Activated B cell treated with CpG ODN at 0.5 μM for 24 hours (primary cell): ENCODE measurements at regions of chr15 and their contacts with region 1.

Region 1: DNA sequence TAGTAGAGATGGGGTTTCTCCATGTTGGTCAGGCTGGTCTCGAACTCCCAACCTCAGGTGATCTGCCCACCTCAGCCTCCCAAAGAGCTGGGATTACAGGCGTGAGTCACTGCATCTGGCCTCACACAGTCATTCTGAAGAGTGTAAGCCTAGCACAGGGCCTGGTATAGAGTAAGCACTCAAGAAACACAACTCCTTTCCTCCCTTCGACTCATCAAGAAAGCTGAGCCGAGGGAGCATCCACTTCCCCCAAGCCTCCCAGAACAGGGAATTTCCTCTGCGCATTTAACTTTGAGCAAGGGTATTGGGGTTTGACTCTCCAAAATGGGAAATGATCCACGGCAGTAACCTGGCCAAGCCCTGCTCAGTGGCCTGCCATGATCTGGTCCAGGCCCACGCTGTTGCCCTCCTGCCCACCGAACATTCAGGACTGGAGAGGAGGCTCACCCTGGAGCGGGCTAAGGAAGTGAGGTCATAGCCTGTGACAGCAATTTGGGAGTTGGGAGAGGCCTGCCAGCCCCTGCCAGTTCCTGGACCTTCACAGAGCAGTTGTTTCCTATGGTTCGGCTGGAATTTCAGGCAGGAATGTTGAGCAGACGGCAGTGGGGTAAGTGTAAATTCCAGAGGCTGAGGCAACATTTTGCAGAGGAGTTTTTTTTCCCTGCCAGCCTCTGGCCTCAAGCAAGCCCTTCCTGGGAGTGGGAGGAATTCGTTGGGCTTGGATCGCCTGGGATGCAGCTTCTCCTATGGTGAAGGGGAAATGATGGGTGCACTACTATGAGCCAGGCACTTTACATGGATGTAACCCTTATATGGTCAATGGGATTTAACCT is 21.2 kb upstream of the SMAD3 start:
- DNase-seq: no peak
- ATAC-seq: no peak
- H3K4me3 Mint-ChIP-seq: no peak overlapping the region
- H3K27ac Mint-ChIP-seq: no peak overlapping the region
- H3K4me1 Mint-ChIP-seq: peaks cover 34% of the 10 kb centered on the region
- H3K27me3 Mint-ChIP-seq: no peaks in the 10 kb centered on the region
- CTCF ChIP-seq: no peak

Region 2: DNA sequence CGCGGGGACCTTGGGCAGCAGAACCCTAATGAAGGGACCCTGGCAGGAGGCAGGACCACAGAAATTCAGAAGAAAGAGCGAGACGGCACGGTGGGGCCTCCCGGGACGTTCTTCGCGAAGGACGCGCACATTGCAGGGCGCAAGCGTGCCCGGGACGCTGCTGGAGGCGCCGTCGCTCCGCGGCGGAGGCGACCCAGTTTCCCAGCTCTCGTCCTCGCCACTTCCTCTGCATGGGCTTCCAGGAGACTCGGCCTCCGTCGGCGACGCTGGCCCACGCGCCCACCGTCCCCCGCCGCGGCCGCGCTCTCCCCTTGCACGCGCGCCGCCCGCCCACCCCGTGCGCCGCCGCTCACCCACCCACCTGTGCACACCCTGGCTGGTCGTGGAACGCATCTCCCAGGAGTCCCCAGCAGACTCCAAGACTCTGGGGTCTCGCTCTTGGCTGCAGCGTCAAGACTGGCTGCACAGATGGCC is 10.5 kb before region 1 on chr15:
- CTCF ChIA-PET with region 1: no interaction called
- POLR2A ChIA-PET with region 1: interaction called, 11 read pairs
- intact Hi-C with region 1: no loop called
- DNase-seq: no peak
- ATAC-seq: peak; percentile 59
- H3K4me3 Mint-ChIP-seq: peak overlapping the region; percentile 51
- H3K27ac Mint-ChIP-seq: no peak overlapping the region
- H3K4me1 Mint-ChIP-seq: peaks cover 26% of the 10 kb centered on the region
- H3K27me3 Mint-ChIP-seq: peaks cover 4% of the 10 kb centered on the region
- CTCF ChIP-seq: no peak

Region 3: DNA sequence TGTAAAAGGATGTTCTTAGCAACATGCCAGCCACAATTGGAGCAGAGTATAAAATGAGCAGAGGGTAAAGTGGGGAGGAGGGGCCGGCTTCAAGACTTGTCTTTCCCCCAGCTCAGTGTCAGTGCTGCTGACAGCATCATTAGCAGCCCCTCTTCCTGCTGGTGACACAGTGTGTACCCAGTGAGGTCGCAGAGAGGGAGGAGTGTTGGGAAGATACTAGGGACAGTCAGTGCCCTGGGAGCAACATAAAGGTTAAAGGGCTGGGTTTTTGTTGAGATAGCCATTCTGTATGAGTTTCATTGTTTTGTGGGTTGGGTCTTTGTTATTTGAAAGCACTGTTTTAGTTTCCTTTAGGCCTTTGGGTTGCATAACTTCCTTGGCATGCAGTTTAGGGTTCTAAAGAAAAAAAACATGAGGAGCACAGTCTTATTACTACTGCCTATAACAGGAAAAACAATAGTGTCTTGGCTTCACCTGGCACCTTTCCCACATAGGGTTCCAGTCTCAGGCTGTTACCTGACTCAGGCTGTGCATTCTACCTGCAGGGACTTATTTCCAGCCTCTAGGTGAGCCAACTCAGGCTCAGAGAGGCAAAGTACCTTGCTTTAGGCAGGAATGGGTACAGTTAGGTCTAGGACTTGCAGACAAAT is 687.1 kb after region 1 on chr15:
- CTCF ChIA-PET with region 1: no interaction called
- POLR2A ChIA-PET with region 1: no interaction called
- intact Hi-C with region 1: no loop called
- DNase-seq: no peak
- ATAC-seq: no peak
- H3K4me3 Mint-ChIP-seq: no peak overlapping the region
- H3K27ac Mint-ChIP-seq: no peak overlapping the region
- H3K4me1 Mint-ChIP-seq: peaks cover 12% of the 10 kb centered on the region
- H3K27me3 Mint-ChIP-seq: no peaks in the 10 kb centered on the region
- CTCF ChIP-seq: no peak